Mucosa of descending colon (tissue), 3 donors: ENCODE measurements at regions of chr13 and their contacts with region 1.

Region 1: GRCh38 chr13:48975856-48976575 is at the start of gene FNDC3A:
- DNase-seq: peak; percentile 85 to 91 (median 90)
- ATAC-seq: peak; percentile 88
- H3K4me3 ChIP-seq: peak within 1 kb of the TSS; percentile 58
- H3K4me1 ChIP-seq: peaks cover 13% of the 10 kb centered on the region
- CTCF ChIP-seq: no peak
- total RNA-seq, gene FNDC3A: 46.6 to 63.6 (median 47.3) TPM

Region 2: DNA sequence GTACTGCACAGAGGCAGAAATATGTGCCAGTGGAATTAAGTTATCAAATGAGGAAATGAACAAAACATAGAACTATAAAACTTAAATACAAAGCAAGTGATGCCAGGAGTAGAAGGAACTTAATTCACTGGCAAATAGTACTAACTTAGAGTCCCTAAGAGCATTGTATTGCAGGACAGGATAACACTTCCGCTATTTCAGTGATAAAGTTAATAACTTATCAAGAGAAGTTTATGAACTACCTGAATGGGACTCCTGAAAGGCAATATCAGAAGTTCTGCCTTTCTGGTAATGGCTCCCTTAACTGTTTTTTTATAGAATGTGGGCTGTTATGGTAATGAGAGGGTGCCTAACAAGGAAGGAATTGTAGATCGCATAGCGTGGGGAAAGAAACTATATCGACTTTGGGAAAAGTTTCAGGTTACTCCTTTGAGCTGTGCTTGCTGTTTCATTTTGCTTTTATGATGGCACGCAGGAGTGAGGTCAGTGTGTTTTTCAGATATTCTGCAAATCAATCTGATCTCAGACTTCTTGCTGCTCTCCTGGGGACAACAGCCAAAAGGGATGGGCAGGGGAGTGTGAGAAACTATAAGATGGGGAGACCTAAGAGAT is 148.8 kb after region 1 on chr13:
- intact Hi-C with region 1: loop called in 1 of 2 experiments (anchors 10 kb)
- DNase-seq: no peak
- ATAC-seq: peak; percentile 54
- H3K4me3 ChIP-seq: no peak overlapping the region
- H3K4me1 ChIP-seq: no peaks in the 10 kb centered on the region
- CTCF ChIP-seq: no peak

Region 3: GRCh38 chr13:49292742-49293486 is 316.9 kb after region 1 on chr13:
- intact Hi-C with region 1: no loop called
- DNase-seq: peak in 1 of 3 donors; percentile 33
- ATAC-seq: no peak
- H3K4me3 ChIP-seq: no peak overlapping the region
- H3K4me1 ChIP-seq: no peaks in the 10 kb centered on the region
- CTCF ChIP-seq: no peak